CD14-positive monocyte (primary cell): ENCODE measurements at regions of chr18 and their contacts with region 1.

Region 1: DNA sequence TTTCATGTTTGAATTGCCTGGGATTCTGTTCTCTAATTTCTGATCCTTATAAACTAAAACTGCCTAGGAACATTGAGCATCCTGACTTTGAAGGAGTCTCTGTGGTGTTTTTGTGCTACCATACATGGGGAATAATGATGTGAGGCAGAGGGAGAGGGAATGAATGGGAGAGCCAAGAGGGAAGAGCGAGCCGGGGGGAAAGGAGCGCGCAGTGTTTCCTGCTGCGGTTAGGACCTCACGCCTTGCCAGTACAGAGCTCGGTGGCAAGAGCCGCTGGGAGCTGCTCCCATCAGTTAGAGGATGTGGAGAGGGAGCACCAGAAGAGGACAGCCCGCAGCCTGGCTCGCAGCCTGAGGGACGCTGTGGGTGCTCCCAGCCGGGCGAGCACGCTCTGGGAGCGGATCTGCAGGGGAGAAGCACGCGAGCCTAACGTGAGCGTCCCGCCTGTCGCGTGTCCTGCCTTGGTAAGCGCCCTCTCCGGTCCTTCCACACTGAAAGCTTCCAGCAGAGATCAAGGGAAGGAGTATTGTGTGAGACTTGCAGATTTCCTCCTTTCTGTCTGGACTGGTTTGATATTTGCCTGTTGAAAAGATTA is 114.7 kb downstream of the FAM210A start:
- DNase-seq: peak; percentile 36 to 47 (median 41)
- H3K4me3 ChIP-seq: peak overlapping the region; percentile 10 to 61 (median 24)
- H3K4me3 Mint-ChIP-seq: peak overlapping the region; percentile 74 to 94
- H3K27ac ChIP-seq: peak overlapping the region in 1 of 2 donors; percentile 23
- H3K27ac Mint-ChIP-seq: peak overlapping the region; percentile 56 to 93 (median 89)
- H3K4me1 ChIP-seq: peaks cover 57 to 65% of the 10 kb centered on the region in 2 donors
- H3K4me1 Mint-ChIP-seq: peaks cover 68% of the 10 kb centered on the region
- H3K27me3 ChIP-seq: peaks cover 0 to 21% of the 10 kb centered on the region in 2 donors
- H3K27me3 Mint-ChIP-seq: peaks cover 29 to 37% (median 30%) of the 10 kb centered on the region in 3 donors
- CTCF ChIP-seq: no peak

Region 2: GRCh38 chr18:13585379-13586153 is 26.1 kb before region 1 on chr18:
- intact Hi-C with region 1: loop called in 1 of 2 experiments (anchors 2 kb)
- DNase-seq: peak; percentile 61 to 83 (median 80)
- H3K4me3 ChIP-seq: peak overlapping the region in 1 of 3 experiments; percentile 53
- H3K4me3 Mint-ChIP-seq: peak overlapping the region; percentile 12 to 57
- H3K27ac ChIP-seq: peak overlapping the region; percentile 76 to 92
- H3K27ac Mint-ChIP-seq: peak overlapping the region; percentile 91 to 98 (median 94)
- H3K4me1 ChIP-seq: peaks cover 55% of the 10 kb centered on the region in 2 donors
- H3K4me1 Mint-ChIP-seq: peaks cover 59% of the 10 kb centered on the region
- H3K27me3 ChIP-seq: no peaks in the 10 kb centered on the region
- H3K27me3 Mint-ChIP-seq: peaks cover 0 to 7% (median 0%) of the 10 kb centered on the region in 3 donors
- CTCF ChIP-seq: no peak